ENCODE measurements at regions of chr21 and their contacts with region 1.

Region 1: GRCh38 chr21:22536506-22536905 is 1538.3 kb downstream of the NCAM2 start:
- DNase-seq: no peak
- ATAC-seq: no peak
- H3K4me3 ChIP-seq: no peak overlapping the region
- H3K27ac ChIP-seq: no peak overlapping the region
- H3K4me1 ChIP-seq: no peaks in the 10 kb centered on the region
- H3K27me3 ChIP-seq: no peaks in the 10 kb centered on the region

Region 2: DNA sequence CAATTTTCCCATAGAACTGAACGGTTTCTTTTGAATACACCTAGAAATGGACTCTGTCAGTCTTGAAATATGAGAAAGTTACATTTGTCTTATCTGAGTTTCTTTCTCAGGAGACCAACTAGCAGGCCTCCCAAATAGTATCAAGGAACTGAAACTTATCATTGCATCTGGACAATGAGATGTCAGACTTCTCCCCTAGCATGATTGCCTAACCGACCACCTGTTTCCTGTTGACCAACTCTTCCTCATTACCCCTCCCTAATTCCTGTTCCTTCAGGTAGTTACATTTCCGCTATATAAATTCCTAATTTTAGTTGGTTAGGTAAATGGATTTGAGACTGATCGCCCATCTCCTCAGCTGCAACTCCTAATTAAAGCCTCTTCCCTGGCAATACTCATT is 49.1 kb after region 1 on chr21:
- intact Hi-C with region 1: loop called in 1 of 2 experiments (anchors 5 kb)
- DNase-seq: no peak
- ATAC-seq: no peak
- H3K4me3 ChIP-seq: no peak overlapping the region
- H3K27ac ChIP-seq: no peak overlapping the region
- H3K4me1 ChIP-seq: no peaks in the 10 kb centered on the region
- H3K27me3 ChIP-seq: no peaks in the 10 kb centered on the region